ENCODE measurements at regions of chr10 and their contacts with region 1.

Region 1: DNA sequence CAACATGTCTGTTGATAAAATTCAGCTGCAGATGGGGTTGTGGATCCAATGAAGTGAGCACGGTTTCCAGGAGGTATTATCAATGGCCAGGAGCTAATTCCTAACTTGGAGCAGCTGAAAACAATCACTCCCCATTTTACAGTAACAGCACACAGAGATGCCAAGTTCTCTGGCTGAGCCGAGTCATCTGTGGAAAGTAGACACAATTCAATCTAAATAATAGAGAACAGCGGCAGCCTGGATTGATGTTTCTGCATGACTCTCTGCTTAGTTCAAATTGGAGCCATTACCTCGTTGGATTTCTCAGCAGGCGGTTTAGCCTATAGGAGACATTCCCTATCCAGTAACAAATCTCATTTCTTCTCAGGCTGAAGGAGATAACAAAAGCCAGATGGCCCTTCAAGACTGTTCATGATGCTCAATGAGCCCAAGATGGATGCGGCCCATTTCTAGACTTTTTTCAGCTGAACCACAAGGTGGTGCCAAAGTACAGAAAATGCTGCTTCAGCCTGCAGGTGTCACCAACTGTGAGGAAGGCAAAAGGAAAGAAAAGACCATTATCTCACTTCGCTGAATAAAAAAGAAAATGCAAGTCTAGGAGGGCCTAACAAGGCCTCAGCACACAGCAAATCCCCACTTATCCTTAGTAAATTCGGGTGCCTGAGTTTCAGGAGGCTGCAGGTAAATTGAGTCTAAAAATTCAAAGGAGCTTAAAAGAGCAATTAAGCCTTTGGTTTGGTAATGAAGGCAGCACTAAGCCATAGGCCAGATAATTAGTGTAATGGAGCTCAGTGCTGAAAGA is 83.7 kb downstream of the SLC16A9 start:
- DNase-seq: no peak

Region 2: DNA sequence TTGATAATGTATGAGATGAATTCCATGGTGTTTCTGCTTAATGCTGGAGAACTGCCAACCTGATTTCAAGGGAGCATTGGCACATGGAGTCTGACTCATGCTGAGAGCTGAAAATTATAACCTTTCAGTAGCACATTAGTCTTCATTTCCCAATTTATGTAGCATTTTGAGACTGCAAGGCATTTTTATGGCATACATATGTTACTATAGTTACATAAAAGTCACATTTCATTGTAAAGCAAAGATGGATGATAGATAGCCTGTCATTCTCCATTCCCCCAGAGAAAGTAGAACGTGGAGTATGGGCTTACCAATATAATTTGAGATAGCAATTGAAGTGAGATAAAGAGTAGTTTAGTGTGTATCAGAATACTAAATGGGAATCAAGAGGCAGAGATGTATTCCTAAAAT is 19.4 kb before region 1 on chr10:
- intact Hi-C with region 1: no loop called
- DNase-seq: no peak

Region 3: DNA sequence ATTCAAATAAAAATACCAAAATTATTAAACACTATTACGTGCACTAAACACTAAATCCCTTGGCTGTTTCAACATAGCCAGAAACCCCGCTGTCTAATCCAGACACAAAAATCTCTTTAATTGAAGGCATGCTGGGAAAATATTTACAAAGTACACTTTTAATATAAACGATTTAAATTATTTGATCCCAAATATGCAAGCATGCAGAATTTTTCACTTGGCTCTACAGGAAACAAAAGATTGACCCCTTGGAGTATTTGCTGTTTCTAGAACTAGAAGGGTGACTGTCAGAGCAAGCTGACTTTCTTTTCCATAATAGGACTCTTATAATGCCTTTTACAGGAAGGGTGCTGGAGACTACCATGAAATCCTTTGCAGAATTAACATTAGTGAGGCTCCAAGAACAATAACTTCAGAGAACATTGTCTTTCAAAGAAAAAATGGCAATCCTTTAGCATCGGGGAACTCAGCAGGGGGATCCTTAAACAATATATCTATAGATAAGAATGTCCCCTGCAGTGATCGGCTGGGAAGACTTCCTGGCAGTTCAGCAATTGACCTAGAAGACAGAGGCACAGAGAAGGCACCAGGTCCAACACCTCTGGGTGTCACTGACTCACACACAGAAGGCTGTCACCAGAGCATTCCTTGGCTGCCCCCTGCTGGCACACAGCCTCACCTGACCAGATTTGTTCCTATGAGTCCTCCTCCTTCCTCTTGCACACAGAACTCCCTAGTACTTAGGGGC is 183.1 kb after region 1 on chr10:
- intact Hi-C with region 1: loop called (anchors 10 kb)
- DNase-seq: peak; percentile 90

Region 4: DNA sequence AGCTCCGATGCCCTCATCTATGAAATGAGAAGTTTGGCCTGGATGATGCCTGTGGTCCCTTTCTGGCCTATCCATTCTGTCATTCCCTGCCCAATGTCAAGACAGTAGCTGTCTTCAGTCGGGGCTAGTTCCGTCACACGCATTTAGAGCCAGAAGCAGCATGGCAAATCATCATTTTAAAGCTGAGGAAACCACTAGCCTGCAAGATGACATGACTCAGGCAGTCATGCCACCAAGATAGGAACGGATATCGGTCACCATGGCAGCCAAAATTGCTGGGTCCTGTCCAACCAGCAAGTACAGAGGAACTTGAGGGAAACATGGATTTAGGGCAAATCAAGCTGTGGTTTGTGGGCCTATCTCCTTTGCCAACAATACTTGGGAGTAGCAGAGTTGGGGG is 191.9 kb after region 1 on chr10:
- intact Hi-C with region 1: loop called in 1 of 2 experiments (anchors 10 kb)
- DNase-seq: peak; percentile 90

Region 5: DNA sequence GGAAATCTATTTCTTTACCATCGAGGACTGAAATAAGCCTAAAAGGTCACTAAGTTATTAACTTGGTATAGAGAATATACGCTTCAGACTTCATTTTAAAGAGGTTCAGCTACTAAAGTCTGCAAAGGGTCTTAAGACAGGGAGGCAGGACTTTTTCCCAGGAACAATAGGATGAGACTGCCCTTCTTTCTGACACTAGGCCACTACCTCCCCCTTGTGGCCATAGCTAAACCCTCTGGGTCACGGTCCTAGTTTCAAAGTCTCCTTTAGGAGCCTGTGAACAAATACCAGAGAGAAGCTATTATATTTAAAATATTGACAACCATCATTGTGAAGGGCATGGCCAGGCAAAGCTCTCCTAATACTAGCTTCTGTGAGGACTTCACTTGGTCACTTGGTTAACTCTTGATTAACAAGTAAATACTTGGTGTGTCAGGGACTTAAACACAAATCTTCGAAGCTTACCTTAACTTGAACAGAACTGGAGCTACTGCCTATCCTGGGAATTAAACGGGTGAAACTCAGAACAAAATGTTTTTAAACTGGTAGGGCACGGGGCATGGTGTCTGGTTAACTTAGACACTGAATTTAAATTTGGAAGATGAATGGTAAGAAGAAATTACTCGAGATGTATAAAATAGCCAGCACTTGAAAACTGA is 204.8 kb after region 1 on chr10:
- intact Hi-C with region 1: loop called in 1 of 2 experiments (anchors 10 kb)
- DNase-seq: no peak

Region 6: GRCh38 chr10:59906417-59907202 is 280.7 kb after region 1 on chr10 and contains the start of gene CCDC6:
- intact Hi-C with region 1: loop called in 1 of 2 experiments (anchors 10 kb)
- DNase-seq: peak; percentile 98
- total RNA-seq, gene CCDC6: 60.4 to 64.3 TPM

Region 7: GRCh38 chr10:60032723-60033122 is 406.8 kb after region 1 on chr10:
- intact Hi-C with region 1: loop called (anchors 2 to 10 kb)
- DNase-seq: no peak

Region 8: DNA sequence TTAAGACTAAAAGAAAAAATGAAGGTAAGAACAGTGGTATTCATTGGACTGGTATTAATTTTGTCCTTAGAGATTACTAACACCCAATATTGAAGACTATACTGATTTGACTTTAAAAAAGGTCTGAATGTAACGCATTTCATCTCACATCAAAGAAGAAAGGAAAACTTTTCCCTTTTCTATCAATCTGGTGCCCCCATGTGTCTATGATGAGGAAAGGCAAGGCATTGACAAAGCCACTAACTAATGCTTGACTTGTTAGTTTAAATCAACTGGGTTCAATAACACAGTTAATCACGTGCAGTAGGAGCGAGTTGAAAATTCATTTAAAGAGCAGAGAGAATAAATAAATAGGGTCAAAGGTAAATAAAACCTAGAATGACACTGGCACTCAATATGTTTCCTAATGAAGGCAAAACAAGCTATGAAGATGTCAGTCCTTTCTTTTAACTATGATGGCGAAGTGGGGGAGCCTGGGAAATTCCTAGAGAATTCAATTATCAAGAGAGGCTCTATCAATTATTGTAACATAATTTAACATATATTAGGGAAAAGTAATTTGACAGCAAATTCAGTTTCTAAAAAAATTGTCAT is 582.9 kb after region 1 on chr10:
- intact Hi-C with region 1: loop called in 1 of 2 experiments (anchors 10 kb)
- DNase-seq: no peak

Measured in posterior vena cava (tissue), 2 donors.